Naive thymus-derived CD4-positive, alpha-beta T cell (primary cell): ENCODE measurements at regions of chr15 and their contacts with region 1.

Region 1: GRCh38 chr15:42728560-42728959 is 8.4 kb downstream of the CDAN1 start:
- DNase-seq: no peak
- ATAC-seq: no peak
- H3K4me3 ChIP-seq: no peak overlapping the region
- H3K4me3 Mint-ChIP-seq: no peak overlapping the region
- H3K27ac ChIP-seq: no peak overlapping the region
- H3K27ac Mint-ChIP-seq: peak overlapping the region in 2 of 9 donors; percentile 10 to 48
- H3K4me1 ChIP-seq: no peaks in the 10 kb centered on the region
- H3K4me1 Mint-ChIP-seq: peaks cover 0 to 5% (median 0%) of the 10 kb centered on the region in 7 donors
- H3K27me3 ChIP-seq: no peaks in the 10 kb centered on the region
- H3K27me3 Mint-ChIP-seq: no peaks in the 10 kb centered on the region

Region 2: DNA sequence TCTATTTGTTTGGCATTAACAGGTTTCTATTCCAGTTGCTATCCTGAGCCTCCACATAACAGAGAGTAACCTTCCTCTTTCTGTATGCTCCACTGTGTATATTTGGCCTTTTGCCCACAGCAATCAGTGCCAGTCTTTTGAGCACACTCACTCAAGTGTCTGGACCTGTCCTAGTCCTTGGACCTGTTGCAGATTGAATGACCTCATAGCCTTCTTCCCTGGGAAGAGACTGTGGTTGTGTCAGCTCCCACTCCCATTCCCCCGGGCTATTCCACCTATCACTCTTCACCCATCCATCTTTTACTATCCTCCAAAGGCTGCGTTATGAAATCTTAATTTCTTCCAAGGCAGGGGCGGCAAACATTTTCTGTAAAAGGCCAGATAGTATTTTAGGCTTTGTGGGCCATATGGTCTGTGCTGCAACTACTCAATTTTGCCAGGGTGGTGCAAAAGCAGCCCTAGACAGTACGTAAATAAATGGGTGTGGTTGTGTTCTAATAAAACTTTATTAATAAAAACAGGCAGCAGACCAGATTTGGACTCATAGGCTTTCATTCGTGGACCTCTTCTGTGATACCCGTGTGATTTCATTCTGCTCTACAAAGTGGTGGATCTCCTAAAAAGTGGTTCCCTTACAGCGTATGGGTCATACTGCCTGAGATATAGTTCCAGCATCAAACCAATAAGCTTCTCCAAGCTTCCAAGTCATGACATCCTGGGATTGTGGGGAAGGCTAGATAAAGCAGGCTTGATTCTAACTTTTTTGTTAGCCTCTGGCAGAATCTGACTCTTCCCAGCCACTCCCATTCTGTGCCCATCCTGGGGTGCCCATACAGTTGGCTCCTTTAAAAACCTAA is 49.0 kb before region 1 on chr15:
- CTCF ChIA-PET with region 1: no interaction called
- POLR2A ChIA-PET with region 1: no interaction called
- intact Hi-C with region 1: no loop called
- DNase-seq: no peak
- ATAC-seq: no peak
- H3K4me3 ChIP-seq: no peak overlapping the region
- H3K4me3 Mint-ChIP-seq: no peak overlapping the region
- H3K27ac ChIP-seq: no peak overlapping the region
- H3K27ac Mint-ChIP-seq: no peak overlapping the region
- H3K4me1 ChIP-seq: no peaks in the 10 kb centered on the region
- H3K4me1 Mint-ChIP-seq: peaks cover 0 to 13% (median 0%) of the 10 kb centered on the region in 7 donors
- H3K27me3 ChIP-seq: no peaks in the 10 kb centered on the region
- H3K27me3 Mint-ChIP-seq: no peaks in the 10 kb centered on the region

Region 3: DNA sequence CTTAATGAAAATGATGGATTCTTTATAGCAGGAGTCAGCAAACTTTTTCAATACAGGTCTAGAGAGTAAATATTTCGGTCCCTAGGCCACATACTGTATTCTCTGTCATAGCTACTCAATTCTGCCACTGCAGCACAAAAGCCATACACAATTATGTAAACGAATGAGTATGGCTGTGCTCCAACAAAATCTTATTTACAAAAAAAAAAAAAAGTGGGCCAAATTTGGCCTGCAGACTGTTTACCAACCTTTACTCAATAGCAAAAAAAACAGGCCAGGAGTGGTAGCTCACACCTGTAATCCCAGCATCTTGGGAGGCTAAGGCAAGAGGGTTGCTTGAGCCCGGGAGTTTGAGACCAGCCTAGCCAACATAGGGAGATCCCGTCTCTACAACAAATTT is 150.9 kb after region 1 on chr15:
- CTCF ChIA-PET with region 1: interaction called, 11 read pairs
- POLR2A ChIA-PET with region 1: no interaction called
- intact Hi-C with region 1: no loop called
- DNase-seq: no peak
- ATAC-seq: no peak
- H3K4me3 ChIP-seq: no peak overlapping the region
- H3K4me3 Mint-ChIP-seq: no peak overlapping the region
- H3K27ac ChIP-seq: no peak overlapping the region
- H3K27ac Mint-ChIP-seq: no peak overlapping the region
- H3K4me1 ChIP-seq: no peaks in the 10 kb centered on the region
- H3K4me1 Mint-ChIP-seq: peaks cover 0 to 15% (median 5%) of the 10 kb centered on the region in 7 donors
- H3K27me3 ChIP-seq: no peaks in the 10 kb centered on the region
- H3K27me3 Mint-ChIP-seq: no peaks in the 10 kb centered on the region